Endothelial cell of umbilical vein (primary cell): ENCODE measurements at regions of chr17 and their contacts with region 1.

Region 1: DNA sequence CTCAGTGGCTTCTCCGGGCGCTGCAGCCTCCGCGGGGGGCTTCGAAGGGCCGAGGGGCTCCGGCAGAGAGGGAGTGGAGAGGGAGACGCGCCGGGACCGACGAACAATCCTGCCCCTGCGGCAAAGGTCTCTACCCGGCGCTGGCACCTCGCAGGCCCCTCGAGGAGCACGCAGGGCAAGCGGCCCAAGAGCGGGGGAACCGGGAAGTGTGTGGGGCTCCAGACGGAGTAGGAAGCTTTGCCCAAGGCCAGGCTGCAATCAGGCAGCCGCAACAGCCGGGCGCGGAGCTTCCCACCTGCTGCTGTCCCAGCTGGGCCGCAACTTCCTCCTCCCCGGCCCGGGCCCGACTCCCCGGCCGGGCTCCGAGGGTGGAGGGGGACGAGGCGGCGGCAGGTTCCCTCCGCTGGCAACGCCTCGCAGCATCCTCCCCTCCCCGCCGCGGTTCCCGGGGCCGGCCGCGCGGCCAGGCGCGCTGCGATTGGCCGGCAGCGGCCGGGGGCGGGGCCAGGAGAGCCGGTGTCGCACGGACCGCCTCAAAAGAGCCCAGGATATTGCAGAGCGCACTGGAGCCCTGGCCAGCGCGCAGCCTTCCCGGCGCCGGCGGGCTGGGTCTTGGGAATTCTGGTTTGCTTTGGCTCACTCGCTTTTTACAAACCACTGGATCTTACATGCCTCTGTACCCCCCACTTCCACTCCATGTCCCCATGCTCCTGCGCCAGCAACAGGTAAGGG is at the start of gene KCNJ2:
- DNase-seq: peak; percentile 93
- H3K4me3 ChIP-seq: peak within 1 kb of the TSS; percentile 85 to 97 (median 95)
- H3K27ac ChIP-seq: peak within 1 kb of the TSS; percentile 87
- H3K4me1 ChIP-seq: peaks cover 58% of the 10 kb centered on the region
- H3K27me3 ChIP-seq: no peaks in the 10 kb centered on the region
- CTCF ChIP-seq: no peak
- POLR2A ChIP-seq: peak; percentile 95
- total RNA-seq, gene KCNJ2: 11.5 and 15.5 TPM in 2 replicates

Region 2: GRCh38 chr17:69597898-69598692 is 571.0 kb before region 1 on chr17:
- CTCF ChIA-PET with region 1: no interaction called
- POLR2A ChIA-PET with region 1: no interaction called
- dilution Hi-C with region 1: no loop called
- intact Hi-C with region 1: loop called (anchors 2 kb)
- DNase-seq: peak; percentile 82
- H3K4me3 ChIP-seq: peak overlapping the region in 1 of 3 experiments; percentile 13
- H3K27ac ChIP-seq: peak overlapping the region; percentile 50
- H3K4me1 ChIP-seq: peaks cover 37% of the 10 kb centered on the region
- H3K27me3 ChIP-seq: no peaks in the 10 kb centered on the region
- CTCF ChIP-seq: no peak
- POLR2A ChIP-seq: no peak

Region 3: DNA sequence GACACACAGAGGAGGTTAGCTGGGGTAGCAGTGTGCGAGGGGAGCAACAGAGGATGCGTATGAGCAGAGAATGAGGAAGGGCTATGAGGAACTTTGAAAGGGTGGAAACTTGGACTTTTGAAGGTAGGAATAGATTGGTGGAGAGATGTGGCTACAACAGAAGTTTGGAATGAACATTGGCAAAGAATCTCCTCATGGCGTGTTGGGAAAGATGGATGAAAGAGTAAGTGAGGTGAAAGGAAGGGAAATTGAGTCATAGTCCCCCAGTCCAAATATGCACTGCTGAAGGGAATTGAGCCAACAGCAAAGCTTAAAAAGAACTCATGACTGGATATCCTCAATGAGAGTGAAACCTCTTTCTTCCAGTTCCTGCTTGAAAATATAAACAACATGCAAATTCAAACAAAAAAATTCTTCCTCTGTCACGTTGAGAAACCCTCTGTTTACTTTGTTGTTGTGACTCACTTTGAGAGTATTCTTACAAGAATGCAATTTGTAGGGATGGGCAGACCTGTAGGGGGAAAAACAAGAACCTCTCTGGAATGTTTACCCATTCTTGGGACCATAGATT is 407.3 kb before region 1 on chr17:
- CTCF ChIA-PET with region 1: no interaction called
- POLR2A ChIA-PET with region 1: no interaction called
- dilution Hi-C with region 1: no loop called
- intact Hi-C with region 1: loop called (anchors 2 kb)
- DNase-seq: peak; percentile 86
- H3K4me3 ChIP-seq: no peak overlapping the region
- H3K27ac ChIP-seq: peak overlapping the region; percentile 91
- H3K4me1 ChIP-seq: peaks cover 21% of the 10 kb centered on the region
- H3K27me3 ChIP-seq: no peaks in the 10 kb centered on the region
- CTCF ChIP-seq: no peak
- POLR2A ChIP-seq: no peak

Region 4: DNA sequence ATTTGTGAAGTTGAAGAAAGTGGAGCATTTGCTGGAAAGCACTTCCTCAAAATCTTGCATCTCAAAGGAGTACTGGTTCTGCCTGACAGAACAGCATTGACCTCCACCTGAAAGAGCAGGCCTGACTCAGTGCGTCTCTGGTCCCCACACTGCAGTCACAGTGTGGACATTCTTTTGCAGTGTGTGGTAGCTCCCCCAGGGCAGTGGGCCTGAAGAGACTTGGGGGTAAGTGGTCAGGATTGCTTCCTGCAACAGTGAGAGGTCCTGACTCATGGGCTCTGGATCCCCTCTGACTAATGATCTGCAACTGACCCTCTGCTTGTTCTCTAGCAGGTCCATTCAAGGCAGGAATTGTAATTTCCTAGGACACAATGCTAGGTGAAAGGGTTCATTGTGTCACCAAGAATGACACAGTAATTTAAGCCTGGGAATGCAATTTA is 299.0 kb before region 1 on chr17:
- CTCF ChIA-PET with region 1: interaction called, 9 read pairs
- POLR2A ChIA-PET with region 1: interaction called, 3 read pairs
- dilution Hi-C with region 1: no loop called
- intact Hi-C with region 1: loop called (anchors 1 kb)
- DNase-seq: peak; percentile 83
- H3K4me3 ChIP-seq: no peak overlapping the region
- H3K27ac ChIP-seq: peak overlapping the region; percentile 39
- H3K4me1 ChIP-seq: peaks cover 38% of the 10 kb centered on the region
- H3K27me3 ChIP-seq: no peaks in the 10 kb centered on the region
- CTCF ChIP-seq: no peak
- POLR2A ChIP-seq: peak; percentile 26

Region 5: DNA sequence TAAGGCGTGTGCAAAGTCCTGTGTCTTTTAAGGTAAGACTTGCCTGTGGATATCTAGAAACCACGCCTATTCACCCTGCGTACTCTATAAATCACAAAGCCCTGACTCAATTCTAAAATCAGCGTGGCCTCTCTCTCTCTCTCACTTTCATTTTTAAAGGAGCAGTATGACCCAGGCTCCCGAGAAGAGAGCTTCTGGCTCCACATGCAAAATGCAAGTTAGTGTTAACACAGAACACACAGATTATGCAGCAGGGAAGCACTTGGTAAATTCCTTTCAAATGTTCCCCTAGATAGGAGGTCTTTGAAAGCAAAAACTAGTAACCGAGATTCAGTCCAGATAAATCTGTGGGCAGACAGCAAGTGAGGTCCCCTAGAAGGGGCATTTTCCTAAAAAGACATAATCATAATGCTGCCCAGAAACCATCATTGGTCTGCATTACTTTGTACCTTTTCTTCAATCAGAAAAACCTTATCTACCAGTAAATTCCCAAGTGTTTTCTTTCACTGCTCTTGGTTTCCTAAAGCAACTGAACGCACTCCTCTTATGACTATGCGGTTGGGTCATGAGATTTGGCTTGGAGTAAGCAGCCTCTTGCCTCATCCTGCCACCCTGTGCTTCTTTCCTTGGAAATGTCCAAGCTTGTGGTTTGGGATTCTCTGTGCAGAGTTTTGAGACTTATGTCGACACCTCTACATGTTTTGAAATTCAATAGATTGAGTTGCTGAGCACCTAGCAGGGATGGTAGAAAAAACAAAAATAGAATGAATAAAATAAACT is 31.5 kb before region 1 on chr17:
- CTCF ChIA-PET with region 1: interaction called, 5 read pairs
- POLR2A ChIA-PET with region 1: interaction called, 4 read pairs
- dilution Hi-C with region 1: no loop called
- intact Hi-C with region 1: loop called (anchors 2 kb)
- DNase-seq: peak; percentile 80
- H3K4me3 ChIP-seq: peak overlapping the region in 2 of 3 experiments; percentile 47 to 70
- H3K27ac ChIP-seq: peak overlapping the region; percentile 43
- H3K4me1 ChIP-seq: peaks cover 14% of the 10 kb centered on the region
- H3K27me3 ChIP-seq: no peaks in the 10 kb centered on the region
- CTCF ChIP-seq: no peak
- POLR2A ChIP-seq: no peak

Region 6: GRCh38 chr17:70295731-70296130 is 126.6 kb after region 1 on chr17:
- CTCF ChIA-PET with region 1: no interaction called
- POLR2A ChIA-PET with region 1: no interaction called
- dilution Hi-C with region 1: no loop called
- intact Hi-C with region 1: loop called (anchors 5 kb)
- DNase-seq: no peak
- H3K4me3 ChIP-seq: no peak overlapping the region
- H3K27ac ChIP-seq: no peak overlapping the region
- H3K4me1 ChIP-seq: peaks cover 7% of the 10 kb centered on the region
- H3K27me3 ChIP-seq: no peaks in the 10 kb centered on the region
- CTCF ChIP-seq: no peak
- POLR2A ChIP-seq: no peak